Cardiac septum (tissue), 1 donor: ENCODE measurements at regions of chr22 and their contacts with region 1.

Region 1: DNA sequence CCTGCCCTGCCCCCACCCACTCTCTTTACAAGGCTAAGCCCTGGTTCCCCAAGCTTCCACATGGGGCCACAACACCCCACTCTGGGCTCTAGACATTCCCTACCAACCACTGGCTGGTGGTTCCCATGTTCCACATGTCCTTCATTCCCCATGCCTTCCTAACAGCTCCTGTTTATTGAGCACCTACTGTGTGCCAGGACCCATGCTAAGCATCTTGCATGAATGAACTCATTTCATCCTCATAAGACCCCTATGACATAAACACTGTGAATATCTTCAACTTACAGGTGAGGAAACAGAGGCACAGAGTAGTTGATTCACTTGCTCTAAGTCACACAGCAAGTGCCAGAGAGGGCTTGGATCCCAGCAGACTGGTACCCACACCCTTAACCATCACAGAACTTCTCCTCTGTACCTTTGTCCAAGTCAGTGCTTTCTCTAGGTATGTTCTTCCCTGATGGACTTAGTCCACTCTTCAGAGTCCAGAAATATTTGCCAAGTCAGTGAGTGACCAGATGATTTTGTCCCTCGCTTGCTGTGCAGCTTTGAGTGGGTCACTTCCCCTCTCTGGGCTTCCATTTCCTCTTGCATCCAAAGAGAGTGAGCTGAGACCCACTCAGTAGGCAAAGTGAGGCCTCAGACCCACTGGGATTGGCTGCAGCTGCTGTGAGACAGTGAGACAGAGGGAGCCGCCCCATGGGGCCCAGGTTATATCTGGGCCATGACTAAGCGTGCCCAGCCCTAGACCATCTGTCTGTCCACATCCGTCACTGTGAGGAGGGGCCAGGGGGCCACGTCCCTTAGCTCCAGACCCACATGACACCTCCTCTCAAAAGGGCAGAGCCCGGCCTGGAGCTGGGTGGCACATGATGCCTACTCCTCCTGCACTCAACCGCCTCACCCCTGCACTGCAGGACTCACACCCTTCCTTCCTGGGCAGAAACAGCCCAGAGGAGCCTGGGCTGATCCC is 132.4 kb downstream of the MN1 start:
- DNase-seq: peak; percentile 91

Region 2: DNA sequence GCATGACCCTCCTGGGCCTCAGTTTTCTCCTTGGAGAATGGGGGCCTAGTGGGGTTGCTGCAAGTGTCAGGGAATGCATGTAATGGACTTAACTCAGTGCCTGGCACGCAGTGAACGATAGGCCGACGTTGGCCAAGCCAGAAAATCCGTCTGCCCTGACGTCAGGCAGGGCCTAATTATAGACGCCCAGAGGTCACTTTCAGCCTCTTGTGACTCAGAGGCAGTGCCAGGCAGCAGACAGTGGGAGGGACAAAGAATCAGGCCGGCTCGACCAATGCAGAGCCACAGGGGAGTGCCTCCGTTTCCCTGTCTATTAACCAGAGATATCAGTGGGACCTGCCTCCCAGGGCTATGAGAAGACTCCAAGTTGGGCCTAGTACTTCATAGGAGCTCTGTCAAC is 17.4 kb after region 1 on chr22:
- intact Hi-C with region 1: loop called (anchors 1 kb)
- DNase-seq: peak; percentile 93

Region 3: GRCh38 chr22:27718186-27719032 is 49.3 kb after region 1 on chr22:
- intact Hi-C with region 1: loop called (anchors 5 kb)
- DNase-seq: peak; percentile 87